HEK293T (cell line): ENCODE measurements at regions of chr15 and their contacts with region 1.

Region 1: DNA sequence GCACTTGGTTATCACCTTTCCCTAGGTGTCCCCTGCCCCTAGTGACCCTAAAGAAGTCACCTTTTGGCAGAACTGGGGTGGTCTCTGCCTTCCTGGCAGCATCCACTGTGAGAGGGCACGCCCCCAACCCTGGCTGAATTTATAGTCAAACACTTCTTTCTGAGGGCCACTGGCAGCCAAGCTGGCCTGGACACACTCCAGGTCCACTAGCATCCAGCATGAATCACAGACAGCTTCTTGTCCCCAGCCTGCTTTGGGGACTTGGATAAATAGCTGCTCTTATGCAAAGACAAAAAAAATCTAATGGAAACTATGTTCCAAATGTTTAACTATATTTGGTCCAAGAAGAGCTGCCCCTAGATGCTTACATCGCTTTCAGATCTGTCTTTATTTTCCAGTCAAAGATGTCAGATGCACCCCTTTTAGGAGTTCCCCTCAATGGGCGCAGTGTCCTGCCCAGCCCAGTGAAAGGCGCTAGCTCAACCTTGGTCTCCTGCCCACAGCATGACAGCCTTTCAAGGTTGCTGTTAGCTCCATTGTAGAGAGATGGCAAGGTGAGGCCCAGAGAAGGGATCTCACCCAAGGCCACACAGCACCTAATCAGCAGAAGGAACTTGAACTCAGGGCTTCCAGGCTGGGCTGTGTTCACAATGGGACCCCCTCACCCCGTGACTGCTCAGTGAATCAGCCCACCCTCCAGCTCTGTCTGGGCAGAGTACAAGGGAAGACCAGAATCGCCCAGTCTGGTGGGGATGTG is 7.0 kb downstream of the RASL12 start:
- DNase-seq: no peak

Region 2: DNA sequence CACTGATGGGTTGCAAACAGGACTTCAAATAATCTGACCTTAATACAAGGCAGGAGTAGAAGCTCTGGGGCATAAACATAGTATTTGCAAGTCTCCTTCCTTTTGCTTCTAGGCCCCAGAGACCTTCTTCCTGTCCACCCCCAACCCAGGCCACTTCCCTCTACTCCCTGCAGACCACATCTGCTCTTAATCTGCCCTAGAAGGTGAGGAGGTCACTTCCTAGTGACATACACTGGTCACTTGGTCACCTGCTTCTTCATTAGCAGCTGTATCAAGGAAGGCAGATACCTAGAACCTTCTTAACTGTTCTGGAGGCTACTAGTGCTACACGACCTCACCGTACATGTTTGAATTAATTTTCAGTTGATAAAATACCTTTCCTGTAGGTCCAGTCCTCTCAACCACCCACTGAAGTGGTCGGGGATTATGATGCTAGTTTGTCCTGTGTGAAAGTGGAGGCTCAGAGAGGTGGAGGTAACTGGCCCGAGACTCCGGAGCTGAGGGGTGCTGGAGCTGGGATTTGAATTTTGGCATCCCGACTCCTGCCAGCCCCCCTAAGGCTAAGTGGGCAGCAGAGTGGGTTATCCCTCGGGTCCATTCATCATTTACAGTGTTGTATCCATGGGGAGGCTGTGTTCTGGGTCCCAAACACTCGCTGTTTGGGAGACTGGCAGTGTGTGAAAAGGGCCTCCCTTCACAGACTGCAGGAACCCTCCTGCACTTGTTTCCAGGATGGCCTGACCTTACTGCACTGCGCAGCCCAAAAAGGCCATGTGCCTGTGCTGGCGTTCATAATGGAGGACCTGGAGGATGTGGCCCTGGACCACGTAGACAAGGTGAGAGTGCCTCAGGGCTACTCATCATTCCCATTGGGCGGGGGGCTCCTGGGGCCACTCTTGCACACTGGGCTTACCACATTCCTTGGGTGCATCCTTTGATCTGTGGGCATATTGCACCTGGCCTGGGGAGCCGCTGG is 135.2 kb before region 1 on chr15:
- CTCF ChIA-PET with region 1: interaction called, 12 read pairs
- POLR2A ChIA-PET with region 1: no interaction called
- DNase-seq: no peak

Region 3: DNA sequence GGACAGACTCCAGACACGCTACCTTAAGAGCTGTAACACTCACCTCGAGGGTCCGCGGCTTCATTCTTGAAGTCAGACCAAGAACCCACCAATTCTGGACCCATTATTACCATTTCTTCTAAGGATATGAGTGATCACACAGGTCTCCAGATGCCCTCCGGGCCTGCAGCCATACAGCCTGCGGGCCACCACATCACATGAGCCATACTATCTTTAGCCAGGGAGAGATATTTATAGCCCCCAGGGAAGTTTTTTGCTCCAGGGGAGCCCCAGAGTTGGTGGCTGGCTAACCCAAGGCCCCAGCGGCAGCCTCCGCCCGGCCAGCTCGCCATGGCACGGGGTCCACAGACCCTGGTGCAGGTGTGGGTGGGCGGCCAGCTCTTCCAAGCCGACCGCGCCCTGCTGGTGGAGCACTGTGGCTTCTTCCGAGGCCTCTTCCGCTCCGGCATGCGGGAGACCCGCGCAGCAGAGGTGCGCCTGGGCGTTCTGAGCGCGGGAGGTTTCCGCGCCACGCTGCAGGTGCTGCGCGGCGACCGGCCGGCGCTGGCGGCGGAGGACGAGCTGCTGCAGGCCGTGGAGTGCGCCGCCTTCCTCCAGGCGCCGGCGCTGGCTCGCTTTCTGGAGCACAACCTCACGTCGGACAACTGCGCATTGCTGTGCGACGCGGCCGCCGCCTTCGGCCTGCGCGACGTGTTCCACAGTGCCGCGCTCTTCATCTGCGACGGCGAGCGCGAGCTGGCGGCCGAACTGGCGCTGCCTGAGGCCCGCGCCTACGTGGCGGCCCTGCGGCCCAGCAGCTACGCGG is 15.9 kb after region 1 on chr15 and contains the start of gene KBTBD13:
- CTCF ChIA-PET with region 1: no interaction called
- POLR2A ChIA-PET with region 1: no interaction called
- DNase-seq: no peak